Activated CD4-positive, alpha-beta T cell treated with anti-CD3 and anti-CD28 coated beads for 36 hours (primary cell): ENCODE measurements at regions of chr1 and their contacts with region 1.

Region 1: GRCh38 chr1:6727535-6727934 is 25.9 kb upstream of the DNAJC11 start:
- DNase-seq: peak; percentile 81
- ATAC-seq: peak; percentile 75
- H3K4me3 Mint-ChIP-seq: no peak overlapping the region
- H3K27ac Mint-ChIP-seq: no peak overlapping the region
- H3K4me1 Mint-ChIP-seq: no peaks in the 10 kb centered on the region
- H3K27me3 Mint-ChIP-seq: peaks cover 7% of the 10 kb centered on the region

Region 2: GRCh38 chr1:6591222-6591621 is 136.3 kb before region 1 on chr1:
- CTCF ChIA-PET with region 1: no interaction called
- POLR2A ChIA-PET with region 1: no interaction called
- intact Hi-C with region 1: no loop called
- DNase-seq: no peak
- ATAC-seq: no peak
- H3K4me3 Mint-ChIP-seq: no peak overlapping the region
- H3K27ac Mint-ChIP-seq: peak overlapping the region; percentile 63
- H3K4me1 Mint-ChIP-seq: peaks cover 7% of the 10 kb centered on the region
- H3K27me3 Mint-ChIP-seq: no peaks in the 10 kb centered on the region

Region 3: GRCh38 chr1:6757719-6758435 is 30.3 kb after region 1 on chr1:
- CTCF ChIA-PET with region 1: no interaction called
- POLR2A ChIA-PET with region 1: no interaction called
- intact Hi-C with region 1: no loop called
- DNase-seq: no peak
- ATAC-seq: no peak
- H3K4me3 Mint-ChIP-seq: no peak overlapping the region
- H3K27ac Mint-ChIP-seq: no peak overlapping the region
- H3K4me1 Mint-ChIP-seq: no peaks in the 10 kb centered on the region
- H3K27me3 Mint-ChIP-seq: peaks cover 20% of the 10 kb centered on the region

Region 4: DNA sequence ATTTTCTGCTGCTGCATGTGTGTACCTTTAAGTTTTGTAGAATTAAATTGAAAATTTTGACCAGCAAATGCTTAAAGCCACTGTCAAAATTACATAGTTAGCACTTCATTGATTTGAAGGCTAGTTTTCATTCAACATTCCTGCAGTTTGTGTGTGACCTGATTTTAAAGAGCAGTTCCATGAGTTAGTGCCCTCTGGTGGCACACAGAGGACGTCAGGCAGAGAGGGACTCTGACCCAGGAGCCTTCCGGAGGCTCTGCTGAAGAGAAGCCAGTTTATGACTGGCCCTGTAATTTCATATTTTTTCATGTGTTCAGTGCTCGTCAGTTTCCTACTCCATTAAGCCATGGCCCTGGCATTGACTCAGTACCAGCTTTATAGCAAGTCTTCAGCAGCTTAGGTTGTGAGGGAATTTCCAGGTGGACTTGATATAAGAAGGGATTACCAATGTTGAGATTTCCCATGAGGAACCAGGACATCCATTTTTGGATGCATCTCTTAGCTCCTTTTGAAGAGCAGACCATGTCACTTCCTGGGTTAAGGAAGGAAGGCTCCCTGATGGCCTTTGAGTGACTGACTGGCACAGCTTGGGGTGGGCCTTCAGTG is 162.4 kb after region 1 on chr1:
- CTCF ChIA-PET with region 1: interaction called, 3 read pairs
- POLR2A ChIA-PET with region 1: no interaction called
- intact Hi-C with region 1: loop called (anchors 1 kb)
- DNase-seq: peak; percentile 65
- ATAC-seq: peak; percentile 51
- H3K4me3 Mint-ChIP-seq: no peak overlapping the region
- H3K27ac Mint-ChIP-seq: no peak overlapping the region
- H3K4me1 Mint-ChIP-seq: peaks cover under 1% of the 10 kb centered on the region
- H3K27me3 Mint-ChIP-seq: no peaks in the 10 kb centered on the region

Region 5: GRCh38 chr1:7218210-7218832 is 490.8 kb after region 1 on chr1:
- CTCF ChIA-PET with region 1: no interaction called
- POLR2A ChIA-PET with region 1: no interaction called
- intact Hi-C with region 1: loop called in 1 of 2 experiments (anchors 5 kb)
- DNase-seq: peak; percentile 52
- ATAC-seq: no peak
- H3K4me3 Mint-ChIP-seq: no peak overlapping the region
- H3K27ac Mint-ChIP-seq: no peak overlapping the region
- H3K4me1 Mint-ChIP-seq: no peaks in the 10 kb centered on the region
- H3K27me3 Mint-ChIP-seq: peaks cover 21% of the 10 kb centered on the region

Region 6: GRCh38 chr1:7646981-7647901 is 919.7 kb after region 1 on chr1:
- CTCF ChIA-PET with region 1: no interaction called
- POLR2A ChIA-PET with region 1: no interaction called
- intact Hi-C with region 1: loop called in 1 of 2 experiments (anchors 5 kb)
- DNase-seq: peak; percentile 85
- ATAC-seq: no peak
- H3K4me3 Mint-ChIP-seq: no peak overlapping the region
- H3K27ac Mint-ChIP-seq: no peak overlapping the region
- H3K4me1 Mint-ChIP-seq: no peaks in the 10 kb centered on the region
- H3K27me3 Mint-ChIP-seq: no peaks in the 10 kb centered on the region